GM10248 (cell line): ENCODE measurements at regions of chr14 and their contacts with region 1.

Region 1: GRCh38 chr14:64764641-64765520 is 60.7 kb downstream of the PLEKHG3 start:
- DNase-seq: peak; percentile 83
- CTCF ChIP-seq: peak; percentile 95

Region 2: DNA sequence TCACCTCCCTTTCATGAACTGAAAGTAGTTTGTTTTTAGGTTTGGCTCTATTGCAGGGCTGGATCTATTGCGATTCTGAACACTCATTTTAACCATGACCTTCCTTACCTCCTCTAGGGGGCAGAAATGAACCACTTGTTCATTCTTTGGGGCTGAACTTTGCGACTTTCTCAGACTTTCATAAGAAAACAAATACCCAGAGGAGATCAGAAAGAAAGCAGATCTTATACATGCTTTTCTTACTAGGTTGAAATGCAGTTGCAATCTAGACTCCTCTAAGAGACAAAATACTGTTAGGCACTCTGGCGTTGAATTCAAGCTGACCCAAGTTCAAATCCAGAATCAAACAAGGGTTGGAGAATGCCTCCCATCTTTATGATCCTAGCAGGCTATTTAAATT is 93.3 kb before region 1 on chr14:
- CTCF ChIA-PET with region 1: interaction called, 12 read pairs
- POLR2A ChIA-PET with region 1: no interaction called
- DNase-seq: peak; percentile 52
- CTCF ChIP-seq: peak; percentile 45

Region 3: DNA sequence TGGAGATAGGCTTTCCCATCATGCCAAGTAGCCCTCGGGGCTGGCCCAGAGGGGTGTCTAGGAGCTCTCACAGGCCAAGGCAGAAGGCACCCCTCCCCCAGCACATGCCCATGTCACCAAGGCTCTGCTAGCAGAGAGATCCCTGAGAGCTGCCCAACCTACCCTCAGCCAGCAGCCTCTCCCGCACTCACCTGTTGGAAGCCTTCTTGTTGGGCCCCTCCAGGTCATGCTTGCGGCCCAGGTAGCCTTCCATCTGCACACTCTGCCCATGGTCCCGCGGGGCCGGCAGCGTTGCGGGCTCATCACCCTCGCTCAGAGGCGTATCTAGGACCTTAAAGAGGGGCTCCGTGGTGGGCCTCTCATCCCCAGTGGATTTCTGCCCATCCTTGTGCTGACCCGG is 11.5 kb before region 1 on chr14:
- CTCF ChIA-PET with region 1: interaction called, 10 read pairs
- POLR2A ChIA-PET with region 1: no interaction called
- DNase-seq: no peak
- CTCF ChIP-seq: no peak